ENCODE measurements at regions of chr11 and their contacts with region 1.

Region 1: GRCh38 chr11:123110356-123110755 is 48.4 kb upstream of the HSPA8 start:
- DNase-seq: no peak
- ATAC-seq: no peak
- H3K4me3 ChIP-seq: no peak overlapping the region
- H3K27ac ChIP-seq: no peak overlapping the region
- H3K4me1 ChIP-seq: no peaks in the 10 kb centered on the region
- H3K27me3 ChIP-seq: peaks cover 0 to 4% (median 0%) of the 10 kb centered on the region in 4 donors
- CTCF ChIP-seq: no peak

Region 2: DNA sequence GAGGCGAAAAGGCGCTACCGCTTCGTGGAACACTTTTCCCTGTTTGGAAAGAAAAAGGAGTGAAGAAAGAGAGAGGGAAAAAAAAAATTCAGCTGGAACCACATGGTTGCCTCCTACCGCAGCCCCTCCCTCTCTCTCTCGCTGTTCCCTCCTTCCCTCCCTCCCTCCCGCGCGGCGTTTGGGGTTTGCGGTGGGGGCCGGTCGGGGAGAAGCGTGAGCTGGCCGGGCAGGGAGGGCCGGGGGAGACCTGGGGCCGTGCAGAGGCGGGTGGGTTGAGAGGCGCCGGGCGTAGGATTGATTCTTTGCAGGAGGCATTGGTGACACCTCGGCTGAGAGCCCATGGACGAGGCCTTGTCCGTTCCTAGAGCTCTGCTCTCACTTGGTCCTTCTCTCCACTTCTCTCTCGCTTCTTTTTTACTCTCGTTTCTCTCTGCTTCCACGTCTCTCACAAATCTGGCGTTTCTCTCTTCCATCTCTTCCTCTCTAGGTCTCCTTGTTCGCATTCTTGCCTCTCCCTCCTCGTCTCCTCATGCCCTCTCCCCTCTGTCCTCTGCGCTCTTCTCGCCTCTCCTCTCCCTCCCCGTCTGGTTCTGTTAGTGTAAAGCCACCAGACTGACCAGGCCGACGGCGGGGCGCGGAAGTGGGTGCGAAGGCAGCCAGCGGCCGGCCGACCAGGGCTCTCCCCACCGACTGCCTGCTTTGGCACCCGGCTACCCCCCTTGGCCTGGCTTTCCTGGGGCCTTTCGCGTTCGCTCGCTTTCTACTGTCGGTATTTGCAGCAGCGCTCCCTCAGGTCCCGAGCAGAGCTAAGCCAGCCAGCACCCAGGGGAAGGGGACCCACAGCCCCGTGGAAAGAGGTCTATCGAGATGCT is 85.1 kb after region 1 on chr11 and contains the start of gene CLMP:
- intact Hi-C with region 1: no loop called
- DNase-seq: peak in 4 of 6 donors; percentile 23 to 63 (median 46)
- ATAC-seq: peak; percentile 46 to 79 (median 74)
- H3K4me3 ChIP-seq: peak within 1 kb of the TSS; percentile 3 to 35 (median 29)
- H3K27ac ChIP-seq: no peak within 1 kb of the TSS
- H3K4me1 ChIP-seq: no peaks in the 10 kb centered on the region
- H3K27me3 ChIP-seq: no peaks in the 10 kb centered on the region
- CTCF ChIP-seq: no peak
- total RNA-seq, gene CLMP: 0.46 to 5.5 (median 2.3) TPM

Region 3: DNA sequence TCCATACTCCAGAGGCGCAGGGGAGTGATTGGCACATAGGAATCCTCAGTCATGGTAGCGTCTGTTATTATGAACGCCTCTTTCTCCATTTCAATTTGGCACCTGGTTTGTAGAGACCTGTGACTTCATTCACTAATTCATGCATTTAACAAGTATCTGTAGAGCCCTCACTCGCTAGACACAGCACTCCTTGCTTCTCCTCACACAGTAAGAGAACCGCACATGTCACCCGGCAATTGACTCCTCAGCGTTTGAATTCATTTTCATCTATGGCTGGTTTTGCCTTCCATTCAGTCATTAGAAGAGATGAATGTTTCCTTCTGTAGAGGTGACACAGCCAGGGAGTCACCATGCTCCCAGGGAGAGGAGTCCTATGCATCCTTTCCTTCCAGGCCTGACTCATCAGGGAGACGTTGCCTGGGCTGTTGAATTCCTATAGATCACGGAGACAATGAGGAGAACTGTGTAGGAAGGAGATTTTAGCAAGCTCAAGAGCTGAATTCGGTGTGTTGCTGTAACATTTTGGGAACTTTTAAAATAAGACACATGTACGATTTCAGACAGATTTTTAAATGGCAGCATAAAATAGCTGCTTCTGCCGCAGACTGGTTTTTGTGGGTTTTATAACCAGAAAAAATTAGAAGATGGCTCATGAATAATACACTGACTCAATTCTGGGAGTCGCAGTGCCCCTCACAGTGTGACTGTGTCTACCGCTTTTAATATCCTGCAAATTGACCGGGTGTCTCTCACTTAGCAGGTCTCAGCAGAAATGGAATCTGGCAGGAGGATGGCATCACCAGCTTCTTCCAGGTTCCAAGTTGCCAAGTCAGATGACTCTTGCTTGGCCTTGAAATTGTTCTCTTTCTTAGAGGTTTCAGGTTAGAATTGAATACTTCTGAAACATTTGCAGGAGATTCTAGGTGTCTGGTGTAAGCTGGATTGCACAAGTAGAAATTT is 129.1 kb after region 1 on chr11:
- intact Hi-C with region 1: loop called in 1 of 3 experiments (anchors 5 kb)
- DNase-seq: no peak
- ATAC-seq: no peak
- H3K4me3 ChIP-seq: no peak overlapping the region
- H3K27ac ChIP-seq: no peak overlapping the region
- H3K4me1 ChIP-seq: no peaks in the 10 kb centered on the region
- H3K27me3 ChIP-seq: no peaks in the 10 kb centered on the region
- CTCF ChIP-seq: no peak